Activated CD4-positive, alpha-beta memory T cell treated with anti-CD3 and anti-CD28 coated beads, Interleukin-2, amount 10 ng/mL, durations not matched to agents 7 days and 5 days (primary cell): ENCODE measurements at regions of chr7 and their contacts with region 1.

Region 1: DNA sequence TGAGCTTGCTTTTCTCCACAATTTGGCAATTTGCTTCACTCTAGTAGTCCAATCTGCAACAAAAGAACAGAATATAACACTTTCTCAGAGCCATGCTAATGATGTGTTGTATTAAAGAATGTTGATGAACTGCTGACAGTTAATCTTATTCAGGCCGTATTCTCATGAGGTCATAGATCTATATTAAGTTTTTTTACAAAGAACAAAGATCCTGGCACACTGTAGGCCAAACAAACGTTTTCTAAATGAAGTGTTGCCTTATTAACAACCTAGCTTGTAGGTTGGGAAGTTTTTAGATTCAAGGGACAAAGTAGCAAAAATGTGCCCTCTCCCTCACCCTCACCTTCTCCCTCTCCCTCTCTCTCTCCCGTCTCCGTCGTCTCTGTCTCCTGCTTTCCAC is 6.8 kb downstream of the HILPDA start:
- DNase-seq: no peak
- H3K4me3 Mint-ChIP-seq: no peak overlapping the region
- H3K27ac Mint-ChIP-seq: no peak overlapping the region
- H3K4me1 Mint-ChIP-seq: peaks cover 24% of the 10 kb centered on the region
- H3K27me3 Mint-ChIP-seq: no peaks in the 10 kb centered on the region

Region 2: GRCh38 chr7:128066861-128067260 is 395.6 kb before region 1 on chr7:
- CTCF ChIA-PET with region 1: no interaction called
- POLR2A ChIA-PET with region 1: no interaction called
- DNase-seq: no peak
- H3K4me3 Mint-ChIP-seq: no peak overlapping the region
- H3K27ac Mint-ChIP-seq: no peak overlapping the region
- H3K4me1 Mint-ChIP-seq: no peaks in the 10 kb centered on the region
- H3K27me3 Mint-ChIP-seq: no peaks in the 10 kb centered on the region

Region 3: GRCh38 chr7:128415217-128415785 is 47.2 kb before region 1 on chr7:
- CTCF ChIA-PET with region 1: interaction called, 10 read pairs
- POLR2A ChIA-PET with region 1: no interaction called
- DNase-seq: no peak
- H3K4me3 Mint-ChIP-seq: no peak overlapping the region
- H3K27ac Mint-ChIP-seq: no peak overlapping the region
- H3K4me1 Mint-ChIP-seq: peaks cover 4% of the 10 kb centered on the region
- H3K27me3 Mint-ChIP-seq: peaks cover 24% of the 10 kb centered on the region

Region 4: GRCh38 chr7:128447941-128448564 is 14.4 kb before region 1 on chr7:
- CTCF ChIA-PET with region 1: interaction called, 12 read pairs
- POLR2A ChIA-PET with region 1: no interaction called
- DNase-seq: no peak
- H3K4me3 Mint-ChIP-seq: no peak overlapping the region
- H3K27ac Mint-ChIP-seq: no peak overlapping the region
- H3K4me1 Mint-ChIP-seq: peaks cover 11% of the 10 kb centered on the region
- H3K27me3 Mint-ChIP-seq: peaks cover 20% of the 10 kb centered on the region